ENCODE measurements at regions of chr21 and their contacts with region 1.

Region 1: DNA sequence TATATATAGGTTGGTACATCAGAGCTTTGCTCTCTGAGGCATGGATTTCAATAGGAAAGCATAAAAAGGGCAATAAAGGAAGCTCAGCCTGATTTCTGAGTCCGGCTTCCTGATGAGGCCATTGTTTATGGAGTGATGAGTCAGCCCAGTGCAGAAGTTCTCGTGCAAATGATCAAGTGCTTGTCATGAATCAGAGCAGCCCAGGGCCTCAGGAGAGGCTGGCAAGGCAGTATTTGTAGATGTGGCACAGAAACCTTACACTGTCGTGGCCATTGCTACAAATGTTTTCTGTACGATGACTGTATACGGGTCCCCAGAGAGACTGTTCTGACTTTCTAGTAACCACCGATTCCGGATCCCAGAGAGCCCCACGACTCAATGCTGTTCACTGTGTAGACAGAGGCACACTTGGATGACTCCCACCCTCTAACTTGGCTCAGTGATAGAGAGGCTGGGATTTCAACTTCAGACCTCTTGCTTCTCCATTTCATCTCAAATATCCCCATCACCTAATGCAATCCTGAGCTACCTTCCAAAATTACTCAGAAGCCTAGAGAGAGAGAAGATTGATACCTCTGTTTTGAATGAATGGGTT is 26.8 kb downstream of the UMODL1 start:
- DNase-seq: peak; percentile 99
- ATAC-seq: peak; percentile 87
- H3K4me3 ChIP-seq: no peak overlapping the region
- H3K27ac ChIP-seq: peak overlapping the region; percentile 94
- H3K4me1 ChIP-seq: peaks cover 16% of the 10 kb centered on the region
- H3K27me3 ChIP-seq: no peaks in the 10 kb centered on the region
- CTCF ChIP-seq: no peak
- POLR2A ChIP-seq: no peak; the same call in 1 of the 2 replicates
- RAD21 ChIP-seq: no peak; the same call in 1 of the 2 replicates

Region 2: DNA sequence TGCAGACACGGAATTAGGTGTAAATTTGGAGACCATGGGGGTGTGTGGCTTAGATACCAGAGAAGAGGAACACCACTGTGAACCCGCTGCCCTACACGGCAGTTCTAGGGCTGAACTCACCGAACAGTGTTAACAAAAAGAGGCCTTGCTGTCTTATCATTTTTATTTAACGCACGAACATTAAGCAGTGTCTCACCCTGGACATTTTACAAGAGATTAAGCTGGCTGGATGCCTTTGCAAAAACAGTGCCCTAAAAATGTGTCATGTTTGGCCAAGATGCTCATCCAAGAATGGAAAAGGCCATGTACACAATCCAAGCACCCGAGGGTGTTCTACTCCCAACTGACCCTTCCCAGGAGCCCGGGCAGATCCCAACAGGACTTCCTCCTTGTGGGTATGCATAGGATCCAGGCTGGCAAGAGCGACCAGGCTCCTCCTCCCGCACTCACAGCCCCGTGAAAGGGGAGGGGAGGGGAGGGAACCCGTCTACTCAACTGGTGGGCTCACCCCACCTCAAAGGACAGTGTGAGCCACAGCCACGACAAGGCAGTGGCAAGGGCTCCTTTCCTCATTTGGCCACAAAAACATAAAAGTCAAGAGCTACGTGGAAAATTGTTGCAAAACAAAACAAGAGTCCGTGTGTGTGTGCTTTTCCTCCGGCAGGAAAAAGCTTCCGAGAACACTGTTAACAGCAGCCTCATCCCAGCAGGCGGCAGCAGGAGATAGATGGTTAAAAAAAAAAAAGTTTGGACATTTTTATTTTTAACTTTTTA is 164.5 kb before region 1 on chr21:
- CTCF ChIA-PET with region 1: no interaction called
- POLR2A ChIA-PET with region 1: no interaction called
- dilution Hi-C with region 1: no loop called
- in situ Hi-C with region 1: loop called (anchors 10 kb)
- intact Hi-C with region 1: no loop called
- DNase-seq: peak; percentile 56
- ATAC-seq: peak; percentile 22
- H3K4me3 ChIP-seq: peak overlapping the region; percentile 19
- H3K27ac ChIP-seq: peak overlapping the region; percentile 69
- H3K4me1 ChIP-seq: peaks cover 19% of the 10 kb centered on the region
- H3K27me3 ChIP-seq: no peaks in the 10 kb centered on the region
- CTCF ChIP-seq: peak; percentile 54
- POLR2A ChIP-seq: no peak
- RAD21 ChIP-seq: peak; percentile 47

Region 3: GRCh38 chr21:41953831-41954653 is 143.9 kb before region 1 on chr21 and contains the start of gene C2CD2:
- CTCF ChIA-PET with region 1: no interaction called
- POLR2A ChIA-PET with region 1: no interaction called
- dilution Hi-C with region 1: no loop called
- in situ Hi-C with region 1: no loop called
- intact Hi-C with region 1: loop called (anchors 5 kb)
- DNase-seq: peak; percentile 73
- ATAC-seq: peak; percentile 89
- H3K4me3 ChIP-seq: peak within 1 kb of the TSS; percentile 92
- H3K27ac ChIP-seq: peak within 1 kb of the TSS; percentile 63; the same call in 1 of the 2 replicates
- H3K4me1 ChIP-seq: peaks cover 26% of the 10 kb centered on the region
- H3K27me3 ChIP-seq: no peaks in the 10 kb centered on the region
- CTCF ChIP-seq: no peak
- POLR2A ChIP-seq: peak; percentile 83
- RAD21 ChIP-seq: no peak
- total RNA-seq, gene C2CD2: 19.4 and 25.3 TPM in 2 replicates

Region 4: GRCh38 chr21:42002421-42002958 is 95.5 kb before region 1 on chr21:
- CTCF ChIA-PET with region 1: no interaction called
- POLR2A ChIA-PET with region 1: interaction called, 3 read pairs
- dilution Hi-C with region 1: no loop called
- in situ Hi-C with region 1: loop called (anchors 5 kb)
- intact Hi-C with region 1: loop called (anchors 2 kb)
- DNase-seq: peak; percentile 98
- ATAC-seq: peak; percentile 94
- H3K4me3 ChIP-seq: no peak overlapping the region; the same call in 1 of the 2 replicates
- H3K27ac ChIP-seq: peak overlapping the region; percentile 68
- H3K4me1 ChIP-seq: peaks cover 15% of the 10 kb centered on the region
- H3K27me3 ChIP-seq: no peaks in the 10 kb centered on the region
- CTCF ChIP-seq: no peak
- POLR2A ChIP-seq: no peak
- RAD21 ChIP-seq: peak; percentile 14

Region 5: GRCh38 chr21:42056996-42057689 is 40.8 kb before region 1 on chr21:
- CTCF ChIA-PET with region 1: no interaction called
- POLR2A ChIA-PET with region 1: no interaction called
- dilution Hi-C with region 1: no loop called
- in situ Hi-C with region 1: no loop called
- intact Hi-C with region 1: loop called (anchors 2 kb)
- DNase-seq: peak; percentile 93
- ATAC-seq: peak; percentile 92
- H3K4me3 ChIP-seq: no peak overlapping the region
- H3K27ac ChIP-seq: peak overlapping the region; percentile 90
- H3K4me1 ChIP-seq: peaks cover 20% of the 10 kb centered on the region
- H3K27me3 ChIP-seq: peaks cover 1% of the 10 kb centered on the region; the same call in 1 of the 2 replicates
- CTCF ChIP-seq: no peak
- POLR2A ChIP-seq: peak; percentile 75; the same call in 1 of the 2 replicates
- RAD21 ChIP-seq: no peak; the same call in 1 of the 2 replicates

Region 6: DNA sequence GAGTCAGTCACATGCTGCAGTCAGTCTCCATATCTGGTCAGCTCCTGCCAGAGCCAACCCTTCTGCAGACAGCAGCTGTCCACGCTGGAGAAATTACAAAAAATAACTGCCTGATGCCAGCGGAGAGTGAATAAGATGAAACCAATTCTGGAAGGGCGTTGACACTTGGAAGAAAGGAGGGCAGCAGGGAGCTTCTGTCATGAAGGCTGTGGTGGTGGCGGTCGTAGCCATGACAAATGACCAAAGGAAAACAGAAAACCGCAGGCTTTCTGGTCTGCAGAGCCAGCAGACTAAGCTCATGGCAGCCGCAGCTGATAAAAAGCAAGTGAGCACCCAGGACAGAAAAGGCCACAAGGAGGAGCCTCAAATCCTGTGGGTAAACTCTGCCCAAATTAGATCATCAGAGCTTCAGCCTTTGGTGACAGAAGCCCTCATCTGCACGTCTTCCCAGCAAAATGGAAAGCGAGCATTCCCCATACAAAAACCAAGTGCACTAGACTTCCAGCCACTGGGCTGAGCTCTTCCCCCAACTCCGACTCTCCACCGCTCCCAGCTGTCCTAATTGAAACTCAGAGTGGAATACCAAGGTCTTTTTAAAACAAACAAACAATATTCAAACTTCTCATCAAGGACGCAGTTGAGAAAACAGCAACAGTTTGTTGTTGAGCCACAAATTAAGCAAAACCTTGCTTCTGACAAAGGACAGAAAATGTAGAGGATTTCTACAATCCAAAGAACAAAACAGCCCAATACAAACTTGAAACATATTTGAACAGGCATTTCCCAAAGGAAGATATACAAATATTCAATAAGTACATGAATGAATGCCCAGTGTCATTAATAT is 369.4 kb after region 1 on chr21:
- CTCF ChIA-PET with region 1: no interaction called
- POLR2A ChIA-PET with region 1: no interaction called
- dilution Hi-C with region 1: no loop called
- in situ Hi-C with region 1: no loop called
- intact Hi-C with region 1: no loop called
- DNase-seq: peak; percentile 7
- ATAC-seq: no peak
- H3K4me3 ChIP-seq: no peak overlapping the region
- H3K27ac ChIP-seq: no peak overlapping the region
- H3K4me1 ChIP-seq: no peaks in the 10 kb centered on the region
- H3K27me3 ChIP-seq: peaks cover 7% of the 10 kb centered on the region
- CTCF ChIP-seq: no peak
- POLR2A ChIP-seq: no peak
- RAD21 ChIP-seq: no peak

Measured in IMR-90 (cell line).